Esophagus muscularis mucosa (tissue), 4 donors: ENCODE measurements at regions of chr6 and their contacts with region 1.

Region 1: DNA sequence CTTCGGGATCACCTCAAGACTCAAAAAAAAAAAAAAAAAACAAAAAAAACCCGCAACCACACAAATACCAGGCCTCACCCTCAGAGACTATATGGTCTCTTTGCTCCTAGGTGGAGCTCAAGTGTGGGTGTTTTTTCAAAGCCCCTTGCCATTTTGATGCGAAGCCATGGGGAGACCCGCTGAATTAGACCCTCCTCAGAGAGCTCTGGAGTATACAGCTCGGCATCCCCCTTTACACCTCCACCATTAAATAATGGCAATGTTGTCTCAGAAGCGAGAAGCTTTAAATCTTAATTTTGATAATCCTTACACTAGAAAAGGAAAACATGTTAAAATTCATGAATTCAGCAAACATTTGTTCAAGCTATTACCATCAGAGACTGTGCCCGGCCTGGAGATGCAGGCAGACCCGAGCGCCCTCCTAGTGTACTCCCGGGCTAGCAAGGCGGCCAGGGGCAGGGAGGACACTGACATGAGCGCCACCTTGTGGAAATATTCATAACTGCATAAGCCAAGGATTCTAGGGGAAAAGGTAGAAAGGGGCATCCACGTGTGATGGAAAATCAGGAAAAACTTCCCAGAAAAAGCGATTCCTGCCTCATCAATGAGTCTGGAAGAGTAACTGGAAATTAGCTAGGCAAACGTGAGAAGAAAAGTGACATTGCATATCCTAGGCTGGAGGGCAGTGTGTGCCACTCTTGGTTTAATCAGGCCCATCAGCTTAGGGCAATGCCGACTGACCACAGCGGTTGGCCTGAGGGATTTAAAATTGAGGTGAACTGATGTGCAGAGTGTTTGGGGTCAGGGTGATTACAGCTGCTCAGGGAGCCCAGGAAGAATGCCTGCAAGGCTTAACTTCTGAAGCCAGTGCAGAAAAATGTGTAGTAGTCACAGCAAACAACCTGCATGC is 72.5 kb downstream of the B3GAT2 start:
- DNase-seq: no peak
- H3K4me3 ChIP-seq: no peak overlapping the region
- H3K27ac ChIP-seq: no peak overlapping the region
- H3K4me1 ChIP-seq: peaks cover 0 to 3% (median 0%) of the 10 kb centered on the region in 4 donors
- H3K27me3 ChIP-seq: no peaks in the 10 kb centered on the region
- CTCF ChIP-seq: peak; percentile 80 to 97 (median 85)
- EP300 ChIP-seq: no peak
- POLR2A ChIP-seq: no peak

Region 2: GRCh38 chr6:70706491-70707123 is 177.7 kb before region 1 on chr6:
- intact Hi-C with region 1: loop called (anchors 2 kb)
- DNase-seq: no peak
- H3K4me3 ChIP-seq: no peak overlapping the region
- H3K27ac ChIP-seq: no peak overlapping the region
- H3K4me1 ChIP-seq: peaks cover 0 to 8% (median 2%) of the 10 kb centered on the region in 4 donors
- H3K27me3 ChIP-seq: no peaks in the 10 kb centered on the region
- CTCF ChIP-seq: peak; percentile 49 to 71 (median 65)
- EP300 ChIP-seq: no peak
- POLR2A ChIP-seq: no peak